ENCODE measurements at regions of chr13 and their contacts with region 1.

Region 1: GRCh38 chr13:49464621-49465325 is 20.7 kb downstream of the SETDB2 start:
- DNase-seq: no peak
- ATAC-seq: no peak
- H3K4me3 ChIP-seq: no peak overlapping the region
- H3K4me3 Mint-ChIP-seq: no peak overlapping the region
- H3K27ac ChIP-seq: no peak overlapping the region
- H3K27ac Mint-ChIP-seq: no peak overlapping the region
- H3K4me1 ChIP-seq: no peaks in the 10 kb centered on the region
- H3K4me1 Mint-ChIP-seq: peaks cover 0 to 4% (median 0%) of the 10 kb centered on the region in 7 donors
- H3K27me3 ChIP-seq: no peaks in the 10 kb centered on the region
- H3K27me3 Mint-ChIP-seq: no peaks in the 10 kb centered on the region

Region 2: DNA sequence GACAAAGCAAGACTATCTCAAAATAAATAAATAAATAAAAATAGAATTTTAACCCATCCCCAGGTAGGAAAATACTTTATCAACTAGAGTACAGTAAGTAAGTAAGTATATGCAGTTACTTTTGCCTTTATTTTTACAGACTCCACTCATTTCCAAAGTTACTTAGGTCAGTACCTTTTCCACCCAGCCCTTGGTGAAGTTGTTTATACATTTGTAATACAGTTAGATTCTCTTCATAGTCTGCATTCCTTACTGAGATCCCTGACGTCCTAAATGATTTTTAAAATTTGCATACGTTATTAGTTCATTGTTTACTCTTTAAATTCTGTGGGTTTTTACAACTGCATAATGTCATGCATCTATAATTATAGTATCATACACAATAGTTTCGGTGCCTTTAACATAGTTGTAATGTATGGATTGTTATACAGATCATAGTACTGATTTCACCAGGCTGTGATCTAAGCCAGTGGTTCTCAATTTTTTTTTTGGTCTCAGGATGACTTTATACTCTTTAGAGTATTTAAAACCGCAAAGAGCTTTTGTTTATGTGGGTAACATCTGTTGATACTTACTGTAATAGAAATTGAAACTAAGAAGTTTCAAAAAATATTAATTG is 10.3 kb before region 1 on chr13:
- CTCF ChIA-PET with region 1: no interaction called
- POLR2A ChIA-PET with region 1: interaction called, 3 read pairs
- intact Hi-C with region 1: loop called in 1 of 2 experiments (anchors 2 kb)
- DNase-seq: no peak
- ATAC-seq: peak; percentile 50
- H3K4me3 ChIP-seq: no peak overlapping the region
- H3K4me3 Mint-ChIP-seq: peak overlapping the region in 4 of 10 donors; percentile 9 to 33 (median 15)
- H3K27ac ChIP-seq: no peak overlapping the region
- H3K27ac Mint-ChIP-seq: peak overlapping the region in 2 of 9 donors; percentile 31 to 54
- H3K4me1 ChIP-seq: peaks cover 0 to 20% of the 10 kb centered on the region in 2 donors
- H3K4me1 Mint-ChIP-seq: peaks cover 26 to 49% (median 33%) of the 10 kb centered on the region in 7 donors
- H3K27me3 ChIP-seq: no peaks in the 10 kb centered on the region
- H3K27me3 Mint-ChIP-seq: no peaks in the 10 kb centered on the region

Measured in naive thymus-derived CD4-positive, alpha-beta T cell (primary cell).